Common myeloid progenitor, CD34-positive (primary cell): ENCODE measurements at regions of chr10 and their contacts with region 1.

Region 1: DNA sequence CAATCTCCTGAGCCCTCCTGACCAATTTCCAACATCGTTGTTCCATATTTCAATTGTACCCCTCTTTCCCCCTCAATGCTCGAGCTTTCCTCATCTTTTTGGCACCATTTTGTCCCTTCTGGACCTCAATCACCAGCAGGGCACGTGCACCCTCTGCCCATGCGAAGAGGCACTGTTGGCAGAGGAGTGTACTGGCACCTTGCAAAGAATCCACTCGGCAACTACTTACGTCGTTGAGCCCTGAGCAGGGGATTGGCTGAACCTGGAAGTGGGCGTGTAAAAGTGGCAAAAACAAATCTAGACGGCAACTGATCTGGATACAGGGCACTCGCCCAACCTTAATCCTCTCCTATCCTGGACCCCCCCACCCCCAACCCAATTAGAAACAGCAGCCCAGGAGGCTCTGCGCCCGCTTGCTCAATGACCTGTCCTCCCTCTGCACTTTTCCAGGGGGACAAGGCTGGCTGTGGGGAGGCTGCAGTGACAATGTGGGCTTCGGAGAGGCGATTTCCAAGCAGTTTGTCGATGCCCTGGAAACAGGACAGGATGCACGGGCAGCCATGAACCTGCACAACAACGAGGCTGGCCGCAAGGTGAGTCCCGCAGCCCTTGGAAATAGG is 18.8 kb downstream of the WNT8B start:
- DNase-seq: peak; percentile 91 to 96 (median 94)
- H3K4me3 ChIP-seq: peak overlapping the region in 6 of 7 experiments; percentile 45 to 73 (median 61)
- H3K27ac ChIP-seq: no peak overlapping the region
- H3K4me1 ChIP-seq: peaks cover 0 to 22% (median 15%) of the 10 kb centered on the region in 4 experiments
- H3K27me3 ChIP-seq: peaks cover 2 to 41% (median 13%) of the 10 kb centered on the region in 5 experiments

Region 2: DNA sequence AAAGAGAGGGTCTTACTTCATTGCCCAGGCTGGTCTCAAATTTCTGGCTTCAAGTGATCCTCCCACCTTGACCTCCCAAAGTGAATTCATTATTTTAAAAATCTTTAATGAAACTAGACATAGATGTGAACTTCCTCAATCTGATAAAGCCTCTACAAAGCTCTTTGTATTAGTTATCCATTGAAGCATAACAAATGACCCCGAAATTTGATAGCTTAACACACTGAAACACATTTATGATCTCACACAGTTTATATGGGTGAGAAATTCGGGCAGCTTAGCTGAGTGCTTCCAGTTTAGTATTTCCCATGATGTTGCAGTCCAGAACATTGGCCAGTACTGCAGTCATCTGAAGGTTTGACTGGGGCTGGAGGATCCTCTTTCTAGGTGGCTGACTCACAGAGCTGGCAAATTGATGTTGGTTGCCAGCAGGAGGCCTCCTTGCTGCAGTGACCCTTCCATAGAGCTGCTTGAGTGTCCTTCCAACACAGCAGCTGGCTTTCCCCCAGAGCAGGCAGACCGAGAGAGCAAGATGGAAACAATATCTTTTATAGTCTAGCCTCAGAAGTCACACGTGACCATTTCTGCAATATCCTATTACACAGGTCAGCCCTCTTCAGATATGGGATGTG is 35.3 kb before region 1 on chr10:
- CTCF ChIA-PET with region 1: no interaction called
- POLR2A ChIA-PET with region 1: no interaction called
- DNase-seq: no peak
- H3K4me3 ChIP-seq: no peak overlapping the region
- H3K27ac ChIP-seq: no peak overlapping the region
- H3K4me1 ChIP-seq: no peaks in the 10 kb centered on the region
- H3K27me3 ChIP-seq: peaks cover 0 to 5% (median 2%) of the 10 kb centered on the region in 5 experiments

Region 3: DNA sequence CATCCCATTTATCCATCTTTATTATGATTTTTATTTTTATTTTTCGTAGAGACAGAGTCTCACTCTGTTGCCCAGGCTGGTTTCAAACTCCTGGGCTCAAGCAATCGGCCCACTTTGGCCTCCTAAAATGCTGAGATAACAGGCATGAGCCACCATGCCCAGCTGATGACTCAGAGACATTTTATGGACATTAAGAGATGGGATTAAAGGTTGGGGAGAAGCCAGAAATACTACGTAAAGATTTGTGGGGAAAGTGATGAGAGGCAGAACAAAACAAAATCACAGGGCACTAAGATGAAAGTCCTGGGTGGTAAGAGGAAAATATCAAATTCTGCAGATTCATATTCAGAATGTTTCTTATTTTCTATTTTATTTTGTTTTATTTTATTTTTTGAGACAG is 11.2 kb before region 1 on chr10:
- CTCF ChIA-PET with region 1: interaction called, 10 read pairs
- POLR2A ChIA-PET with region 1: no interaction called
- DNase-seq: no peak
- H3K4me3 ChIP-seq: no peak overlapping the region
- H3K27ac ChIP-seq: no peak overlapping the region
- H3K4me1 ChIP-seq: no peaks in the 10 kb centered on the region
- H3K27me3 ChIP-seq: peaks cover 0 to 8% (median 2%) of the 10 kb centered on the region in 5 experiments

Region 4: GRCh38 chr10:100501423-100501822 is 19.9 kb after region 1 on chr10:
- CTCF ChIA-PET with region 1: interaction called, 75 read pairs
- POLR2A ChIA-PET with region 1: no interaction called
- DNase-seq: no peak
- H3K4me3 ChIP-seq: no peak overlapping the region
- H3K27ac ChIP-seq: no peak overlapping the region
- H3K4me1 ChIP-seq: no peaks in the 10 kb centered on the region
- H3K27me3 ChIP-seq: no peaks in the 10 kb centered on the region

Region 5: DNA sequence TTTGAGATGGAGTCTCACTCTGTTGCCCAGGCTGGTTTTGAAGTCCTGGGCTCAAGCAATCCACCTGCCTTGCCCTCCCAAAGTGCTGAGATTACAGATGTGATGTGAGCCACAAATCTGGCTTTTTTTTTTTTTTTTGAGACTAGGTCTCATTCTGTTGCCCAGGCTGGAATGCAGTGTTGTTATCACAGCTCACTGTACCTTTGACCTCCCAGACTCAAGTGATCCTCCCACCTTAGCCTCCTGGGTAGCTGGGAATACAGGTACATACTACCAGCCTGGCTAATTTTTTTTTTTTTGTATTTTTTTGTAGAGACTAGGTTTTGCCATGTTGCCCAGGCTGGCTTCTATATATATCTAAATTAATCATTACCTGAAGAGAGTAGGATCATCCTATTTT is 116.6 kb after region 1 on chr10:
- CTCF ChIA-PET with region 1: no interaction called
- POLR2A ChIA-PET with region 1: no interaction called
- DNase-seq: no peak
- H3K4me3 ChIP-seq: no peak overlapping the region
- H3K27ac ChIP-seq: no peak overlapping the region
- H3K4me1 ChIP-seq: no peaks in the 10 kb centered on the region
- H3K27me3 ChIP-seq: peaks cover 3 to 56% (median 13%) of the 10 kb centered on the region in 5 experiments